Activated T-helper 1 cell treated with anti-CD3 and anti-CD28 coated beads, Interleukin-12 subunit alpha, Interleukin-12 subunit beta, Interleukin-2, Interleukin-4 antibody, amounts not matched to agents 30 ng/mL and 10 ng/mL and 1 ng/mL, durations not matched to agents 14 hours and 24 hours and 36 hours (primary cell): ENCODE measurements at regions of chr2 and their contacts with region 1.

Region 1: GRCh38 chr2:202238234-202239197 is at the start of gene SUMO1:
- DNase-seq: peak; percentile 89
- H3K4me3 Mint-ChIP-seq: peak within 1 kb of the TSS; percentile 98
- H3K27ac Mint-ChIP-seq: peak within 1 kb of the TSS; percentile 93
- H3K4me1 Mint-ChIP-seq: peaks cover 26% of the 10 kb centered on the region
- H3K27me3 Mint-ChIP-seq: peaks cover 4% of the 10 kb centered on the region
- total RNA-seq, gene SUMO1: 126 and 127 TPM in 2 replicates

Region 2: GRCh38 chr2:200888704-200889625 is 1349.6 kb before region 1 on chr2 and contains the starts of genes NIF3L1 and PPIL3:
- intact Hi-C with region 1: loop called (anchors 5 kb)
- DNase-seq: peak; percentile 96
- H3K4me3 Mint-ChIP-seq: peak within 1 kb of the TSS; percentile 97
- H3K27ac Mint-ChIP-seq: peak within 1 kb of the TSS; percentile 99
- H3K4me1 Mint-ChIP-seq: peaks cover 54% of the 10 kb centered on the region
- H3K27me3 Mint-ChIP-seq: no peaks in the 10 kb centered on the region
- total RNA-seq, gene NIF3L1: 26.6 and 27.3 TPM in 2 replicates
- total RNA-seq, gene PPIL3: 44.2 TPM in 2 replicates

Region 3: GRCh38 chr2:201580486-201580885 is 658.0 kb before region 1 on chr2:
- intact Hi-C with region 1: no loop called
- DNase-seq: no peak
- H3K4me3 Mint-ChIP-seq: no peak overlapping the region
- H3K27ac Mint-ChIP-seq: no peak overlapping the region
- H3K4me1 Mint-ChIP-seq: no peaks in the 10 kb centered on the region
- H3K27me3 Mint-ChIP-seq: peaks cover 12% of the 10 kb centered on the region

Region 4: DNA sequence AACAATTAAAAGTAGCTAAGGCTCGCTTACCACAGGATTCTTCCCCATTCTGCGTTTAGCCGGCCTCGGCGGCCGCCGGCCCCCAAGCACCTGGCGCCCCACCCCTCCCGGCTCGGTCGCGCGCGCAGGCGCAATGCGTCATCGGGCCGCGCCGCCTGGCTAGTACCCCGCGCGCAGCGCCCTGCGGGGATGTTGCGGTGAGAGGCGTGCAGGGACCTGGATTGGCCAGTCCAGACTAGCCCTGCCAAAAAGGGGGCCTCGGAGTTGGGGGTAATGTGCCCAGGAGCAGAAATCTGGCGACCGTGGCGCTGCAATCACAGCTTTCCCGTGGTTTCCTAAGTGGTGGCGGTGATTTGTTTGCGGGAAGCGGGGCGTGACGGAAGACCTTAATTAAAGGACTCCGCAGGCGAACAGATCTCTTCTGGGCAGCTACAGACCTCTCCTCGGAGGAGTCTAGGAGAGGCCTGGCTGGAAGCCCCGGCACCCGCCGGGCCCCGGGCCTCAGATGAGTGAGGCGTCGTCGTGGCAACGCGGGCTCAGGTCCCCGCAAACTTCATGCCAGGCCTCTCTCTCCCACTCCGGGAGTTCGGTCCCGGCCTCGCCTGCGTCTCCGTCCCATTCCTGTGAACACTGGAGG is 595.8 kb before region 1 on chr2:
- intact Hi-C with region 1: loop called (anchors 5 kb)
- DNase-seq: peak; percentile 84
- H3K4me3 Mint-ChIP-seq: peak overlapping the region; percentile 89
- H3K27ac Mint-ChIP-seq: peak overlapping the region; percentile 92
- H3K4me1 Mint-ChIP-seq: peaks cover 18% of the 10 kb centered on the region
- H3K27me3 Mint-ChIP-seq: peaks cover 3% of the 10 kb centered on the region

Region 5: DNA sequence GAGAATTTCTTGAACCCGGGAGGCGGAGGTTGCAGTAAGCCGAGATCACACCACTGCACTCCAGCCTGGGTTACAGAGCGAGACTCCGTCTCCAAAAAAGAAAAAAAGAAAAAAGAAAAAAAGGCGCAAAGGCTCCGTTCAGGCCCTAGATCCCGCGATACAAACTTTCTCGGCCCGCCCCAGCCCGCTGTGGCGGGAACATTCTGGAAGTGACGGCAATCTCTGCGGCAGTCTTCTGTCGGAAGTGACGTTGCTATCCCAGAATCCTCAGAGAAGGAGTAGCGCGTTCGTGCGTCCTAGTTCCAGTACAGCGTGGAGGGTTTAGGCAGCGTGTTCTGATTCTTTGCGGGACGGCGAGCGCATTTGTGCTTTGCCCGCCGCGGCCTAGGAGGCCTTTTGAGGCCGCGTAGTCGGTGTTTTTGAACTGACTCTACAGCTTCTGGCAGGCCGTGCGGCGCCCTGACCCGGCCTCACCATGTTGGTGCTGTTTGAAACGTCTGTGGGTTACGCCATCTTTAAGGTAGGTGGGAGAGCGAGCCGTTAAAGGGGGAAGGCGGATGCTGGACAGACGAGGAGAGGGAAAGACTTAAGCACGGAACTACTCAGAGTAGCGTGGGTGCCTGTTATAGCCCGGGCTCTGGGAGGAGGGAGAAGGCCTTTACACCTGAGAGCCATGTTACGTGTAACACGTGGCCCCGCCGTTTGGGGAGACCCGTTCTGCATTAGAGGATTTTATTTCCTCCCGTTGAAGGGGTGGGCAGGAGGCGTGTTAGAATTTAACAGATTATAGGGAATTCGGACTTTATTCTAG is 27.2 kb after region 1 on chr2 and contains the start of gene NOP58:
- intact Hi-C with region 1: loop called (anchors 1 kb)
- DNase-seq: peak; percentile 91
- H3K4me3 Mint-ChIP-seq: peak within 1 kb of the TSS; percentile 55
- H3K27ac Mint-ChIP-seq: peak within 1 kb of the TSS; percentile 45
- H3K4me1 Mint-ChIP-seq: peaks cover 19% of the 10 kb centered on the region
- H3K27me3 Mint-ChIP-seq: no peaks in the 10 kb centered on the region
- total RNA-seq, gene NOP58: 227 and 241 TPM in 2 replicates

Region 6: DNA sequence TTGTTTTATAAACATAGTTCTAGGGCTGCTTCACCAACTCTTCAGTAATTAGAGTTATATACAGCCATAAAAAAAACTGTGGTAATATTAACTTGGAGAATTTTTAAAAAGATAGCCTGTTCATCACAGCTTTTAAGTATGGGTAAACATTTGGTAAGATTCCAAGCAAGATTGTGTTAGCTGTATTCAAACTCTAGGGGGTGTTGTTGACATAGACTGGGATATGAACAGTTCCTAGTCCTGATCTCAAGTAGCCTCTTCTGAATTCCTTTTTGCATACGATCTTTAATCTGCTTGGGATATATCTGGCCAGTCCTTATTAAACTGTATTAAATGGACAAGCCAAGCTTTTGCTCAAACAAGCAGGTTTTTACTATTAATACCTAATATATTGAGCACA is 40.4 kb after region 1 on chr2:
- intact Hi-C with region 1: loop called (anchors 1 kb)
- DNase-seq: no peak
- H3K4me3 Mint-ChIP-seq: peak overlapping the region; percentile 7
- H3K27ac Mint-ChIP-seq: peak overlapping the region; percentile 92
- H3K4me1 Mint-ChIP-seq: peaks cover 24% of the 10 kb centered on the region
- H3K27me3 Mint-ChIP-seq: no peaks in the 10 kb centered on the region

Region 7: GRCh38 chr2:202299712-202300111 is 61.2 kb after region 1 on chr2:
- intact Hi-C with region 1: loop called (anchors 5 kb)
- DNase-seq: no peak
- H3K4me3 Mint-ChIP-seq: no peak overlapping the region
- H3K27ac Mint-ChIP-seq: peak overlapping the region; percentile 71
- H3K4me1 Mint-ChIP-seq: peaks cover 16% of the 10 kb centered on the region
- H3K27me3 Mint-ChIP-seq: no peaks in the 10 kb centered on the region

Region 8: GRCh38 chr2:202771741-202772460 is 533.4 kb after region 1 on chr2:
- intact Hi-C with region 1: no loop called
- DNase-seq: no peak
- H3K4me3 Mint-ChIP-seq: no peak overlapping the region
- H3K27ac Mint-ChIP-seq: no peak overlapping the region
- H3K4me1 Mint-ChIP-seq: no peaks in the 10 kb centered on the region
- H3K27me3 Mint-ChIP-seq: no peaks in the 10 kb centered on the region